ENCODE measurements at regions of chr12 and their contacts with region 1.

Region 1: DNA sequence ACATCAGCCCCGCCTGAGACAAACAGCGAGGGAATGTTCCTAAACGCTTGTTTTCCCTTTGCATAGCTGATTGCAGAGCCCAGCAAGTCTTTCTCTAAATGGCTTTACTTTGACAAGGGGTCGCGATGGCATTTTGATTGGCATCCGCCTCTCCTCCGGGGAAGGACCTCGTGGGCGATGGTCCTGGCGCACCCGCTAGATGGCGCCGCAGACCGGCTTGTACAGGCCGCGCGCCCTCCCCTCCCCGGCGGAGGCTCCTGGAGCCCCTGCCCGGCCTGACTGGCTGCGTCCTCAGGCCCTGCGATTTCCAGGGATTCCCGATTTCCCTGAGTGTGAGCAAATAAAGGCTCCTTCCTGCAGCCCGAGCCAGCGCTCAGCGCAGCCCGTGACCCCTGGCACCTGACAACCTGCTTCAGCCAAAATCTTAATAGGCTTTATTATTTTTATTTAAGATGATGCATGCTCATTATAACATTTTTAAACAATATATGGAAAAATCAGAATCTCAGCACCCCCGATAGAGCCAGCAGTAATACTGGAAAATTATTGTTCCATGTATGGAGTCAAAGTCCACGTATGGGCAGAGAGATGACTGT is 468.3 kb downstream of the AACS start:
- DNase-seq: peak; percentile 86
- H3K4me3 Mint-ChIP-seq: no peak overlapping the region
- H3K27ac Mint-ChIP-seq: no peak overlapping the region
- H3K4me1 Mint-ChIP-seq: no peaks in the 10 kb centered on the region
- H3K27me3 Mint-ChIP-seq: peaks cover 31% of the 10 kb centered on the region
- CTCF ChIP-seq: peak; percentile 92

Region 2: GRCh38 chr12:125683748-125684381 is 150.3 kb after region 1 on chr12:
- CTCF ChIA-PET with region 1: no interaction called
- intact Hi-C with region 1: loop called (anchors 2 kb)
- DNase-seq: peak; percentile 83
- H3K4me3 Mint-ChIP-seq: no peak overlapping the region
- H3K27ac Mint-ChIP-seq: no peak overlapping the region
- H3K4me1 Mint-ChIP-seq: no peaks in the 10 kb centered on the region
- H3K27me3 Mint-ChIP-seq: peaks cover 8% of the 10 kb centered on the region
- CTCF ChIP-seq: peak; percentile 49

Region 3: GRCh38 chr12:126069549-126070165 is 536.1 kb after region 1 on chr12:
- CTCF ChIA-PET with region 1: no interaction called
- intact Hi-C with region 1: loop called (anchors 5 kb)
- DNase-seq: peak; percentile 82
- H3K4me3 Mint-ChIP-seq: no peak overlapping the region
- H3K27ac Mint-ChIP-seq: no peak overlapping the region
- H3K4me1 Mint-ChIP-seq: peaks cover 9% of the 10 kb centered on the region
- H3K27me3 Mint-ChIP-seq: no peaks in the 10 kb centered on the region
- CTCF ChIP-seq: peak; percentile 77

Region 4: GRCh38 chr12:126708492-126708896 is 1175.0 kb after region 1 on chr12:
- CTCF ChIA-PET with region 1: no interaction called
- intact Hi-C with region 1: loop called (anchors 1 kb)
- DNase-seq: no peak
- H3K4me3 Mint-ChIP-seq: no peak overlapping the region
- H3K27ac Mint-ChIP-seq: no peak overlapping the region
- H3K4me1 Mint-ChIP-seq: no peaks in the 10 kb centered on the region
- H3K27me3 Mint-ChIP-seq: no peaks in the 10 kb centered on the region
- CTCF ChIP-seq: no peak

Region 5: GRCh38 chr12:126874427-126875026 is 1341.0 kb after region 1 on chr12:
- CTCF ChIA-PET with region 1: no interaction called
- intact Hi-C with region 1: loop called (anchors 1 kb)
- DNase-seq: peak; percentile 84
- H3K4me3 Mint-ChIP-seq: no peak overlapping the region
- H3K27ac Mint-ChIP-seq: no peak overlapping the region
- H3K4me1 Mint-ChIP-seq: no peaks in the 10 kb centered on the region
- H3K27me3 Mint-ChIP-seq: no peaks in the 10 kb centered on the region
- CTCF ChIP-seq: peak; percentile 85